ENCODE measurements at regions of chr2 and their contacts with region 1.

Region 1: DNA sequence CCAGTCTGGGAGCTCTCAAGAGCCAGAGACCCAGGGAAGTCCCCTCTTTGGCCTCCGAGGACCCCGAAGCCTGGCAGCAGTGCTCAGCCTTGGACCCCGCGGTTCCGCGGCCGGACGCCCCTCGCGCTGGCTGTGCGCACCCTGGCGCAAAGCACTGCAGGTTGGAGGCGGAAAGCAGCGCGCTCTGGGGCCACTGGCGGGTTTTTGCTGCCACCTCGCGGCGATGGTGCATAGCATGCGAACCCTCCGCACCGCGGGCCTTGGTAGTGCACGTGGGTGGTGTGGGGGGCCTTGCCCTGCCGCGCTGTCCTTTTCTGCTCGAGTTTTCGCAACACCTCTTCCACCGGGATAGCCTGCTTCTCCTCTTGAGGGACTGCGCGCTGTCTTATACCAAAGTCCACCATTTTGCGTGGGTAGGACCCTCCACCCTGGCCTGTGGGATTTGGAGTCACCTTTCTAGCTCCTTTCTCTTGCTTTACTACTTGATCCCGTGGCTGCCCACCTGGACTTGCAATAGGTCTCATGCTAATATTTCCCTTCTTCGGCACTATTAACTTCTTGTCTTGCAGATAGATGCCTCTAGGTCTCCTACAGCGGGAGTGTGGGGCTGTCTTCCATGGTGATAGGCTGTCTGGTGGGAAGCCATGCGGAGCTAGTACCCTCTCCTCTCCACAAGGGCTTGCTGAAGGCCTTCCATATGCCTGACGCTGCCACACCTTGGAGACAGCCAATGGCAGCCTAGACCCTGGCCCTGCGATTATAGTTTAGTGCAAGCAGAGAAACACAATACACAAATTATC is 14.3 kb downstream of the SIX3 start:
- DNase-seq: peak; percentile 90
- ATAC-seq: peak; percentile 65
- H3K4me3 Mint-ChIP-seq: peak overlapping the region; percentile 67
- H3K27ac Mint-ChIP-seq: no peak overlapping the region
- H3K4me1 Mint-ChIP-seq: peaks cover 45% of the 10 kb centered on the region
- H3K27me3 Mint-ChIP-seq: peaks cover 70% of the 10 kb centered on the region
- CTCF ChIP-seq: peak; percentile 71

Region 2: DNA sequence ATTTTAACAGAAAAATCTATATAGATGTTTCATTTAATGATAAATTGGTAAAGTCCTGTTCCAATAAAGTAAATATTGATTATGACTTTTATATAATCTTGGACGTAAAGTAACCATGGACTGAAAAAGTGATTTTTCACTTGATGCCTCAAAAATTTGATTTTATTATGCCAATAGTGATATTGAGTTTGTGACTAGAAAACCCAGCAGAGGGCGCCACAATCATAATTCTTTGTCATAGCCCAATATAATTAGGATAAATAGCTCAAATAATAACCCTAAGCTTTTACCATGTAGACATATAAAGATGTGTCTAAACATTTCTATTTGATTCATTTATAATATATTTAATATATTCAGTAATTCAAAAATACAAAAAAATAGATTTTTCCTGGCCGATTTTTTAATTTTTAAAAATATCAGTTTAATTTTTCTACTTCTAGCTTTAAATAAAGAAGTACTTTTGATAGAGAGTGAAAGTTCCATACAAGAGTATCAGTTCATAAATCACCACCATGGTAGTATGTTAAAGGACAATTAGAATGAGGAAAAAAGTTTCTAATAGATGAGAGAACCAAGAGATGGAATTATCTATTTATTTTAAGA is 563.4 kb before region 1 on chr2:
- CTCF ChIA-PET with region 1: interaction called, 23 read pairs
- POLR2A ChIA-PET with region 1: no interaction called
- DNase-seq: peak; percentile 41
- ATAC-seq: no peak
- H3K4me3 Mint-ChIP-seq: no peak overlapping the region
- H3K27ac Mint-ChIP-seq: no peak overlapping the region
- H3K4me1 Mint-ChIP-seq: peaks cover 29% of the 10 kb centered on the region
- H3K27me3 Mint-ChIP-seq: no peaks in the 10 kb centered on the region
- CTCF ChIP-seq: 0 out of 2 replicates have a peak, but pooled peaks have one; percentile 35

Region 3: DNA sequence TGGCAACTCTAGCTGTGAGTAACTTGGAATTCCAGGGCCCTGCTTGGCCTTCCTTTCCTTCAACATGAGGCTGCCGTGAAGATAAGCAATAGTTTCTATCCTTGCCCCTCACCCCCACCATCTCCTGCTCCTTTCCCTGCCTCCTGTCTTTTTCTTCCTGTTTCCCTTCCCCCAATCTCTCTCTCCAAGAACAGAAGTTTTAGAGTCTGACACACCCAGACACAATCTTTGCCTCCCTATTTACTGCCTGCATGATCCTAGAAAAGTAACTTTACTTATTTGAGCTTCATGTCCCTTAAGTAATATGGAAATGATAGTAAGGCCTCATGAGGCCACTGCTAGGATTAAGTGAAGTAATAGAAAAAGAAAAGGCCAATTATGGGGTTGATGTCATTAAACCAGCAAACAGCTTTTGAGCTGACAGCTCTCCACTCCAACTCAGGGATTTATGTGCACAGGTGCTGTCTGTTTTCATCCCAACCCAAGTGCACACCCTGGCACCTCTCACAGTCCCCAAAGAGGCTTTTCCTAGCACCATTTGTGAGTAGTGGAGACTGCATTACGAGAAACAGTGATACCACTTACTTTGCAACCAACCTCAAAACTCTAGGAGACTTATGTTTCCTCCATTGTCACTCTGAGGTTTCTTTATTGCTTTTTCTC is 138.0 kb before region 1 on chr2:
- CTCF ChIA-PET with region 1: no interaction called
- POLR2A ChIA-PET with region 1: no interaction called
- DNase-seq: no peak
- ATAC-seq: no peak
- H3K4me3 Mint-ChIP-seq: no peak overlapping the region
- H3K27ac Mint-ChIP-seq: no peak overlapping the region
- H3K4me1 Mint-ChIP-seq: peaks cover 31% of the 10 kb centered on the region
- H3K27me3 Mint-ChIP-seq: peaks cover 2% of the 10 kb centered on the region; the same call in 1 of the 2 replicates
- CTCF ChIP-seq: no peak

Region 4: DNA sequence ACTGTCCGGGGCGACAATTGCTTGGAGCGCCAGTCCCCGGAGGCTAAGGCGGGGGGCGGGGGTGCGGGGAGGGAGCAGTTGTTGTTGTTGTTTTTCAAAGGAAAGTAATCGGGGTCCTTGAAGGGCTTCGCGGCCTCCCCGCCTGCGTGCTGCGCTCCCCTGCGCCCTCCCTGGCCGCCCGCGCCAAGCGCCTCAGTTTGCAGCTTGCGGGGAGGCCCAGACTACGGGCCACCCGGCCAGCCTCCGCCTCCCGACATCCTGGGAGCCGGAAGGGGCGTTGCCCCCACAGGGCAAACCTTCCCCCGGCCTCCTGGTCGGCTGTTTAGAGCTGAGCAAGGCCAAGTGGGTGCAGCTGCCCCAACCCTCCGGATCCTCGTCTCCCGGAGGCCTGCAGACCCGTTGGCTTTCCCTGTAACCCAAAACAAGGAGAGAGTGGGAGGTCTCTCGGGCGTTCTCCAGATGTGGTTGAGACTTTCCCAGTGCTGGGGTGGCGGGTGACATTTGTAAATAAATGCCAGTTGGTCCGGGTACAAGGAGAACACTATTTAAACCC is 18.0 kb before region 1 on chr2:
- CTCF ChIA-PET with region 1: interaction called, 14 read pairs
- POLR2A ChIA-PET with region 1: no interaction called
- DNase-seq: peak; percentile 79
- ATAC-seq: peak; percentile 5
- H3K4me3 Mint-ChIP-seq: peak overlapping the region; percentile 77
- H3K27ac Mint-ChIP-seq: no peak overlapping the region
- H3K4me1 Mint-ChIP-seq: peaks cover 41% of the 10 kb centered on the region
- H3K27me3 Mint-ChIP-seq: peaks cover 95% of the 10 kb centered on the region
- CTCF ChIP-seq: no peak

Region 5: GRCh38 chr2:44981136-44982108 is 25.6 kb after region 1 on chr2:
- CTCF ChIA-PET with region 1: interaction called, 17 read pairs
- POLR2A ChIA-PET with region 1: no interaction called
- DNase-seq: peak; percentile 82
- ATAC-seq: peak; percentile 87
- H3K4me3 Mint-ChIP-seq: no peak overlapping the region
- H3K27ac Mint-ChIP-seq: no peak overlapping the region
- H3K4me1 Mint-ChIP-seq: peaks cover 17% of the 10 kb centered on the region
- H3K27me3 Mint-ChIP-seq: no peaks in the 10 kb centered on the region; the same call in none of the 2 replicates
- CTCF ChIP-seq: peak; percentile 87

Region 6: GRCh38 chr2:45009303-45009927 is 53.6 kb after region 1 on chr2 and contains the start of gene SIX2:
- CTCF ChIA-PET with region 1: interaction called, 28 read pairs
- POLR2A ChIA-PET with region 1: no interaction called
- DNase-seq: peak; percentile 97
- ATAC-seq: peak; percentile 73
- H3K4me3 Mint-ChIP-seq: peak within 1 kb of the TSS; percentile 74
- H3K27ac Mint-ChIP-seq: no peak within 1 kb of the TSS
- H3K4me1 Mint-ChIP-seq: peaks cover 44% of the 10 kb centered on the region
- H3K27me3 Mint-ChIP-seq: peaks cover 93% of the 10 kb centered on the region
- CTCF ChIP-seq: no peak
- total RNA-seq, gene SIX2: 1.2 to 1.7 TPM (median 1.5 TPM) in 3 replicates

Region 7: DNA sequence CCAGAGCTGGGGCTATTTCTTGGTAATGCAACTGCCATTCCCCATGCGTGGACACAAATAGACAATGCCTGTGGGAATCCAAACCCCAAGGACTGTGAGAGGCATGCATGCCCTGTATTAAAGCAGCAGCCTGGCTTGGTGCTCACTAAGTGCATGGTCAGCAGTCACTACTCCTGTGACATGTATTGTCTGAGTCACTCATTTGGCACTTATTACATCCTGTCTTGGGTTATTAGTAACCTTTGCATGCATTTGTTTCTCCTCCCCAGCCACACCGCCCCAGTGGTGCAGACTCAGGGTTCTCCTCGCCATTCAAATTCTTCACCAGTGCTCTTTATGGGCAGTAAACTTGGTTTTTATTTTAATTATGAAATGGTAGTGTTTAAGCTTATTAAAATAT is 725.9 kb after region 1 on chr2:
- CTCF ChIA-PET with region 1: no interaction called
- POLR2A ChIA-PET with region 1: no interaction called
- DNase-seq: no peak
- ATAC-seq: no peak
- H3K4me3 Mint-ChIP-seq: no peak overlapping the region
- H3K27ac Mint-ChIP-seq: no peak overlapping the region
- H3K4me1 Mint-ChIP-seq: peaks cover 13% of the 10 kb centered on the region
- H3K27me3 Mint-ChIP-seq: no peaks in the 10 kb centered on the region
- CTCF ChIP-seq: no peak